ENCODE measurements at regions of chr13 and their contacts with region 1.

Region 1: DNA sequence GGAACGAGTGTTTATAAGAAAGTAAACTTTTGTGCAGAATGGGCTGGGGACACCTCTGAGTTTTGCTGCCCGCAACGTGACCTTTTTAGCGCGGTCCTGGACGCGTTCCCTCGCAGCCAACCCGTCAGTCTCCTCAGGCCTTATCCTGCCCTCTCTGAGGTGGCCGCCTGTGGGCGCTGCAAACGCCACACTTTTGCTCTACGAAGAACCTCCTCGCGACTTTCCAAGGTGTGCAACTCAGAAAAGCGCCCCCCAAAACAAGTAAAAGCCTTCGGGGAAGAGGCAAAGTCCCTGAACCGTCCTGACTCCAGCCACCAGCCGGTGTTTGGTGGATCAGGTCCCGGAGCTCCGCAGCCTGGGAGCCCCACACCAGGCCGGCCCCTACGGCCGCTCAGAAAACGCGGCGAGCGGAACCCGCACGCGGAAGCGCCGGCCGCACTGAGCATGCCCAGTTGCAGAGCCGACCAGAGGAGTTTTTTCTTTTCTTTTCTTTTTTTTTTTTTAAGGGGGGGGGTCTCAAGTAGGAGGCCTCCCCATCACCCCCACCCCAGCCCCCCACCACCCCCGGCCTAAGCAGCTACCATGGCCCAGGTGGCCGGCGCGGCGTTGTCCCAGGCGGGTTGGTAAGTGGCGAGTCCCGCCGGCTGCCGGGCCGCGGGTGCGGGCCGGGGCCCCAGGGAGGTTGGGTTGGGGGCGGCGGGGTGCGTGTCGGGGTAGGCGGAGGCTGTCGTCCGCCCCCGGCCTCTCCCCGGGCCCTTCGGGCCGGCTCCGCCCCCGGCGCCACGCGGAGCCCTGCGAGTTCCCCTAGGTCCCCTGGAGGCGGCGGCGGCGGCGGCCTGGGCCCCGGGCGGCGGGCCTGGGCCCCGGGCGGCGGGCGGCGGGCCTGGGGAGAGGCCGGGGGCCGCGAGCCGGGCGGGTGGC is at the start of gene TDRD3:
- DNase-seq: peak; percentile 55 to 92 (median 79)
- ATAC-seq: peak; percentile 70
- H3K4me3 ChIP-seq: peak within 1 kb of the TSS; percentile 83 to 88
- H3K4me3 Mint-ChIP-seq: peak within 1 kb of the TSS; percentile 94
- H3K27ac ChIP-seq: peak within 1 kb of the TSS; percentile 82 to 83
- H3K27ac Mint-ChIP-seq: peak within 1 kb of the TSS; percentile 96
- H3K4me1 ChIP-seq: peaks cover 24% of the 10 kb centered on the region
- H3K4me1 Mint-ChIP-seq: peaks cover 42% of the 10 kb centered on the region
- H3K27me3 ChIP-seq: no peaks in the 10 kb centered on the region
- H3K27me3 Mint-ChIP-seq: no peaks in the 10 kb centered on the region
- CTCF ChIP-seq: peak; percentile 63
- total RNA-seq, gene TDRD3: 22.1 to 22.4 TPM

Region 2: DNA sequence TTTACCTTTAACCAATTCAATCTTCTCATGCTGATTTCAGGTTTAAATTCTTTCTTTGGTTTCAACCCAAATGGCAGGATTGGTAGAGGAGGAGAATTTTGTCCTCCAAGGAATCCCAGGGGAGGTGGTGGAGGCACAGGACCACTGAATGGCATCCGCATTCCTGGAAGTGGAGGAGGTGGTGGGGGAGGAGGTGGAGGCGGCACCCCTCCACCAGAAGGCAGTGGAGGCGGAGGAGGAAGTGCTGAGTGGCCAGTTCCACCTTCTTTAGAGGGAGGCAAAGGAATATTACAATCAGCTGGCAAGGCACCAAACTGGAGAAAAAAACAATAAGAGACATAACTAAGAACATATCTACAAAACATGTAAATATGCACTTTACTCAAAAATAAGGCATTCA is 426.2 kb before region 1 on chr13:
- CTCF ChIA-PET with region 1: no interaction called
- POLR2A ChIA-PET with region 1: no interaction called
- intact Hi-C with region 1: no loop called
- DNase-seq: no peak
- ATAC-seq: no peak
- H3K4me3 ChIP-seq: no peak overlapping the region
- H3K4me3 Mint-ChIP-seq: no peak overlapping the region
- H3K27ac ChIP-seq: no peak overlapping the region
- H3K27ac Mint-ChIP-seq: no peak overlapping the region
- H3K4me1 ChIP-seq: no peaks in the 10 kb centered on the region
- H3K4me1 Mint-ChIP-seq: no peaks in the 10 kb centered on the region
- H3K27me3 ChIP-seq: no peaks in the 10 kb centered on the region
- H3K27me3 Mint-ChIP-seq: no peaks in the 10 kb centered on the region
- CTCF ChIP-seq: no peak

Region 3: GRCh38 chr13:60163478-60164233 is 233.4 kb before region 1 on chr13 and contains the start of gene DIAPH3:
- CTCF ChIA-PET with region 1: no interaction called
- POLR2A ChIA-PET with region 1: interaction called, 3 read pairs
- intact Hi-C with region 1: loop called (anchors 1 to 2 kb)
- DNase-seq: peak; percentile 84 to 94 (median 92)
- ATAC-seq: peak; percentile 99
- H3K4me3 ChIP-seq: peak within 1 kb of the TSS; percentile 77 to 95
- H3K4me3 Mint-ChIP-seq: peak within 1 kb of the TSS; percentile 95
- H3K27ac ChIP-seq: peak within 1 kb of the TSS; percentile 70 to 89
- H3K27ac Mint-ChIP-seq: peak within 1 kb of the TSS; percentile 95
- H3K4me1 ChIP-seq: peaks cover 16% of the 10 kb centered on the region
- H3K4me1 Mint-ChIP-seq: peaks cover 24% of the 10 kb centered on the region
- H3K27me3 ChIP-seq: no peaks in the 10 kb centered on the region
- H3K27me3 Mint-ChIP-seq: peaks cover 9% of the 10 kb centered on the region
- CTCF ChIP-seq: no peak
- total RNA-seq, gene DIAPH3: 0.06 to 0.11 TPM

Region 4: DNA sequence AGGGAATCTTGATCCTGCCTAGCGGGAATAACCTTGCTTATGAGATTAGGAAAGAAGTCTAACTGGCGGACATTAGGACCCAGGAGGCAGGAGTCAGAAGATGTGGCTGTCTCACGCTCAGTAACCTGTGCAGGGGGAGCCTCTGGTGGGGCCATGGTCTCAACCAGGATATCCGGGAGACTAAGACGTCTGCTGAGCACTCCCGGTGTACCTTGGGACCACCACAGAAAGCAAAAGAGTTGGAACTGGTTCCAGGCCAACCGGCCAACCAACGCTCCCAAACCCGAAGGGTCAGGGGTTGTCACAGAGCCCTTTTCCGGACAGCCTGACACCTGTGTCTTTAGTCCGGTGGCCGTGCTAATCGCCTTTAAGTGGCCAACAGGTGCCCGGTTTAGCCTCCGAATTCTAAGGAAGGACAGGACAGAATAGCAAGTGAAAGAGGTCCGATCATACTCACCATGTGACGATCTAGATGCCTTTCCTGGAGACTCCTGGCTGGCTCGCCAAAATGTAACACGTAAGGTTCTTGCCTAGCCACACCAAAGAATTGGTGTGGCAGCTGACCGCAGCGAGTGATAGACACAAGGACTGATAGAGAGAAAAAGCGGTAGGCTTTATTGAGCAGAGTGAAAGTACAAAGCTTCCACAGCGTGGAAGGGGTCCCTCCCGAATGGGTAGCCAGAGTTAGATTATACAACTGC is 129.4 kb before region 1 on chr13:
- CTCF ChIA-PET with region 1: no interaction called
- POLR2A ChIA-PET with region 1: no interaction called
- intact Hi-C with region 1: loop called in 1 of 2 experiments (anchors 5 kb)
- DNase-seq: peak in 8 of 9 experiments; percentile 3 to 69 (median 42)
- ATAC-seq: peak; percentile 91
- H3K4me3 ChIP-seq: peak overlapping the region; percentile 65 to 67
- H3K4me3 Mint-ChIP-seq: no peak overlapping the region
- H3K27ac ChIP-seq: peak overlapping the region; percentile 41 to 62
- H3K27ac Mint-ChIP-seq: no peak overlapping the region
- H3K4me1 ChIP-seq: peaks cover 9% of the 10 kb centered on the region
- H3K4me1 Mint-ChIP-seq: peaks cover 4% of the 10 kb centered on the region
- H3K27me3 ChIP-seq: no peaks in the 10 kb centered on the region
- H3K27me3 Mint-ChIP-seq: no peaks in the 10 kb centered on the region
- CTCF ChIP-seq: no peak

Region 5: DNA sequence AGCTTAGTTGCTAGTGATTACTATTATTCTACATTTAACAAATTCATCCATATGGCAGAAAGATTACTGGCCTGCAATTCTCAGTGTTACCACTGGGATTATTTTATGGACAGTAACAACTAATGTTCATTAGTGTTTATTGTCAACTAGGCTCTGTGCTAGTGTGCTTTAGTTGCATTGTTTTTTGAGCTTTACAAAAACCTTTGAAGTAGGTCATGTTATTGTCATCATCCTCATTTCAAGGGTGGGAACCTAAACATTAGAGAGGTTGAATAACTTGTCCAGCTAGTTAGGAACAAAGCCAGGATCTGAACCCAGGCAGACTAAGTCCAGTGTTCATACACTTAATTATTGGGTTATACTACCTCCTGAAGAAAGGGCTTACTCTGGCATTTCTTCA is 27.8 kb before region 1 on chr13:
- CTCF ChIA-PET with region 1: no interaction called
- POLR2A ChIA-PET with region 1: interaction called, 3 read pairs
- intact Hi-C with region 1: loop called in 1 of 2 experiments (anchors 1 kb)
- DNase-seq: peak in 1 of 9 experiments; percentile 9
- ATAC-seq: no peak
- H3K4me3 ChIP-seq: no peak overlapping the region
- H3K4me3 Mint-ChIP-seq: no peak overlapping the region
- H3K27ac ChIP-seq: no peak overlapping the region
- H3K27ac Mint-ChIP-seq: no peak overlapping the region
- H3K4me1 ChIP-seq: no peaks in the 10 kb centered on the region
- H3K4me1 Mint-ChIP-seq: peaks cover 2% of the 10 kb centered on the region
- H3K27me3 ChIP-seq: no peaks in the 10 kb centered on the region
- H3K27me3 Mint-ChIP-seq: peaks cover 2% of the 10 kb centered on the region
- CTCF ChIP-seq: peak; percentile 40

Measured in CD8-positive, alpha-beta T cell (primary cell).